ENCODE measurements at regions of chrX and their contacts with region 1.

Region 1: GRCh38 chrX:84188320-84188834 is 378 bp upstream of the RPS6KA6 start:
- DNase-seq: peak; percentile 61
- ATAC-seq: peak; percentile 68
- H3K4me3 ChIP-seq: peak overlapping the region; percentile 88
- H3K27ac ChIP-seq: no peak overlapping the region
- H3K4me1 ChIP-seq: peaks cover 14% of the 10 kb centered on the region; the same call in 1 of the 2 replicates
- H3K27me3 ChIP-seq: no peaks in the 10 kb centered on the region
- CTCF ChIP-seq: no peak

Region 2: DNA sequence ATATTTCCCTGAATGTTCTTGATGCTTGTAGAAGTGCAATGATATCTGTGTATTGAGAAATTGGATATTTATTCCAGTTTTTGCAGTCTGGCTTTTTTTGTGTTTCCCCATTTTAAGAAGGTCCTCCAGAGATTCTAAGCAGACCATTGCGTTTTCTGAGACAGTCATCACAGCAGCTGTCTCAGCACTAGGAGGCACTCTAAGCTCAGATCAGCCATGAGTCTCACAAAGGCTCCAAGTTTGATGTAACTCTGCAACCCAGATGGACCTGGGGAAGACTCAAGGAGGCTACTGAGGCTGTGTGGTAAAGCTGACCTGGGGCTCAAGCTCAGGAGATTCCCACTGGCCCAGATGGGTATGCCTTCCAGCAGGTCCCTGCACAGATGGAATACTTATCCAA is 416.7 kb before region 1 on chrX:
- CTCF ChIA-PET with region 1: no interaction called
- POLR2A ChIA-PET with region 1: interaction called, 5 read pairs
- intact Hi-C with region 1: loop called (anchors 5 kb)
- DNase-seq: peak; percentile 13
- ATAC-seq: peak; percentile 69
- H3K4me3 ChIP-seq: no peak overlapping the region
- H3K27ac ChIP-seq: no peak overlapping the region
- H3K4me1 ChIP-seq: no peaks in the 10 kb centered on the region
- H3K27me3 ChIP-seq: no peaks in the 10 kb centered on the region
- CTCF ChIP-seq: peak; percentile 40

Region 3: DNA sequence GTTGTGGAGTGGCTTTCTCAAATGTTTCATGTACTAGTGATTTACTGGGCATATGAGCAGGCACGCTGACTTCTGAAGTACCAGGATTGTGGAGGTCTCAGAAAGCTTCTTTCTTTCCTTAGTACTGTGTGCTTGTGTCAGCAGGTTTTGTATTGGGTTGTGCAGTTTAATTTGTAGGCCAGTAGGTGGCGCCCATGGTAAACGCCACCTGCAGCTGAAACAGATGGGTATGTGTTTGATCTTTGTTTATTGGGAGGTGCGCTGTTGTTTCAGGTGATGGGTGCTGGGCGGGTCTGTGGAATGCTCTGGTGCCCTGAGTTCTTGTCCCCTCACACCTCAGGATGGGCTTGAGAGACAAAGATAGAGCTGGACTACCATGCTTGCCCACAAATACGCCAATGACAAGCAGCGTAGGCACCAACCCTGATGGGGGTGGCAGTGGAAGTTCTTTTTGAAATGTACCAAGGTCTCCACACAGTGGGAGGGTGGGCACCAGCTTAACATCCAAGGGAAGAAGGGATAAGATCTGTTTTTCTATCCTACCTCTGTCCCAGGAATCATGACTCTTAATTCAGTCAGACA is 141.9 kb before region 1 on chrX:
- CTCF ChIA-PET with region 1: no interaction called
- POLR2A ChIA-PET with region 1: interaction called, 6 read pairs
- intact Hi-C with region 1: loop called (anchors 1 kb)
- DNase-seq: peak; percentile 57
- ATAC-seq: peak; percentile 74
- H3K4me3 ChIP-seq: no peak overlapping the region
- H3K27ac ChIP-seq: no peak overlapping the region
- H3K4me1 ChIP-seq: peaks cover 7% of the 10 kb centered on the region; the same call in 1 of the 2 replicates
- H3K27me3 ChIP-seq: no peaks in the 10 kb centered on the region
- CTCF ChIP-seq: peak; percentile 83

Region 4: GRCh38 chrX:84099120-84099519 is 89.3 kb before region 1 on chrX:
- CTCF ChIA-PET with region 1: no interaction called
- POLR2A ChIA-PET with region 1: no interaction called
- intact Hi-C with region 1: loop called (anchors 5 kb)
- DNase-seq: no peak
- ATAC-seq: no peak
- H3K4me3 ChIP-seq: no peak overlapping the region
- H3K27ac ChIP-seq: no peak overlapping the region
- H3K4me1 ChIP-seq: no peaks in the 10 kb centered on the region
- H3K27me3 ChIP-seq: no peaks in the 10 kb centered on the region
- CTCF ChIP-seq: no peak

Region 5: GRCh38 chrX:84441143-84441542 is 252.8 kb after region 1 on chrX:
- CTCF ChIA-PET with region 1: no interaction called
- POLR2A ChIA-PET with region 1: no interaction called
- intact Hi-C with region 1: loop called (anchors 10 kb)
- DNase-seq: peak; percentile 78
- ATAC-seq: peak; percentile 92
- H3K4me3 ChIP-seq: no peak overlapping the region
- H3K27ac ChIP-seq: peak overlapping the region; percentile 72
- H3K4me1 ChIP-seq: peaks cover 27% of the 10 kb centered on the region
- H3K27me3 ChIP-seq: no peaks in the 10 kb centered on the region
- CTCF ChIP-seq: no peak

Region 6: GRCh38 chrX:84501798-84502628 is 313.6 kb after region 1 on chrX and contains the start of gene HDX:
- CTCF ChIA-PET with region 1: no interaction called
- POLR2A ChIA-PET with region 1: no interaction called
- intact Hi-C with region 1: loop called (anchors 1 kb)
- DNase-seq: peak; percentile 80
- ATAC-seq: peak; percentile 96
- H3K4me3 ChIP-seq: peak within 1 kb of the TSS; percentile 80
- H3K27ac ChIP-seq: peak within 1 kb of the TSS; percentile 70
- H3K4me1 ChIP-seq: no peaks in the 10 kb centered on the region
- H3K27me3 ChIP-seq: no peaks in the 10 kb centered on the region
- CTCF ChIP-seq: no peak
- total RNA-seq, gene HDX: 2.8 and 3.4 TPM in 2 replicates

Measured in PC-3 (cell line).